ENCODE measurements at regions of chr1 and their contacts with region 1.

Region 1: DNA sequence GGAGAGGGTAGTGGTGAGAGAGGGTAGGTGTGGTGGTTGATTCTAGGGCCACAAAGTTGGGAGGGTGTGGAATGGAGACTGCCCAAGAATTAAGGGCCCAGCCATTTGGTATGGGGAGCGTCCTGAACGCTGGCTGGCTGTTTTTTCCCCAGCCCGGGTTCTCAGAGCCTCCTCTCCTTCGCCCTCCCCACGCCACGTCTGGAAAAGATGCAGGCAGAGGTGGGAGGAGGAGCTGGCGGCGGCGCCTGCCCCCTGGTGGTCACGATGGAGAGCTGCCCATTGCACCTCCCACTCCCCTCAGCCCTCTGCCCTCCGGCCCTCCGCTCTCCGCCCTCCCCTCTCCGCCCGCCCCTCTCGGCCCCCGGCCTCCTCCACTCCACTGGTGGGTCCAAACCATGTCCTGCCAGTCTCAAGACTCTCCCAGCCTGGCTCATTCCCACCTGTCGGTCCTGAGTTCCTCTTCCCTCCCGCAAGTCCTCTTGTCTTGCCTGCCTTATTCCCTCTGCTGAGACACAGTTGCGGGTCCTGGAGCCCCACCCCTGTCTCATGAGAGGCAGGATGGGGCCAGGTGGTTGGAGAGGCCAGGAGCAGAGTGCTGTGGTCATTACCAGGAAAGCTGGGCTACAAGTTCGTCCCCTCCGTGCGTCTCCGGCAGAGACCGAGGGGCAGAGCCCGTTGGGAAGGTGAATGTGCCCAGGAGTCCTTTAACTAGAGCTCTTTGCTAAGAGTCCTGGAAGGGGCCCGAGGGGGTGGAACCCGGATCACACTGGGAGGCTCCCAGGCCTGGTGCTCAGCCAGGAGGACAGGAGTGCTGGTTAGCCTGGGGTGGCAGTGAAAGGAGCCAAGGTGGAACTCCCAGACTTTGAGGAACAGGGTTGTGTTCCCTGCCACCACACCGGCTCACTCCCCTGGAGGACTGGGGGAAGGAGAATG is 22.6 kb downstream of the ETNK2 start:
- DNase-seq: peak; percentile 60 to 84
- H3K4me3 ChIP-seq: no peak overlapping the region
- H3K27ac ChIP-seq: peak overlapping the region; percentile 39 to 64
- H3K4me1 ChIP-seq: peaks cover 5 to 61% (median 36%) of the 10 kb centered on the region in 4 donors
- H3K27me3 ChIP-seq: no peaks in the 10 kb centered on the region
- CTCF ChIP-seq: peak; percentile 85 to 91

Region 2: DNA sequence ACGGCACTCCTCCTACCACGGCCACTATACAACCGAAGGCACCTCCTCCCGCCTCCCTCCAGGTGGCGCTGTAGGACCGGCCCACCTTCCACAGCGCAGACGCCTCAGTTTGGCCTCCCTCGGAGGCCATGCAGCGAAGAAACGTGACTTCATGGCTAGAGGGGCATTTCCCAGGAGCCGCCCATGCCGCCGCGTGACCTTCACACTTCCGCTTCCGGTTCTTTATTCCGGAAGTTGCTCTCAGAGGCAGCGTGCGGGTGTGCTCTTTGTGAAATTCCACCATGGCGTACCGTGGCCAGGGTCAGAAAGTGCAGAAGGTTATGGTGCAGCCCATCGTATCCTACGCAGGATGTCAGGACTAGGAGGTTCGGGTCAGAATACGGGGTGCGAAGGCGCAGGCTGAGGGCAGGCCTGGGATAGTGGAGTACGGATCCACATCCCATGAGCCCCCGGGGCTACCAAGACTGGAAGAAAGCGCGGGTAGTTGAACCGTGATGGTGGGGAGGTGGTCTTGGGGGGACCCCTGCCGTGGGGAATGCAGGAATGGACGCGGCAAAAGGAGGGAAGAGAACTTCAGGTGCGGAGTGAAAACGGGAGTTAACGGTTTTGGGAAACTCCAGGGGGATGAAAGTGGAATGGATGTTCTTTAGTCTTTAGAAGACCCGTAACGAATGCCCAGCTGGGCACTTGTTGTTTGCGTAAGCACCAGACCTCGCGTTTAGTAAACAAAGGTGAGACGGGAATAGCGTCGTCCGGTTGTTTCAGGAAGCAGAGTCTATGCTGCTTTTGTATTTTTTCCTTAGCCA is 267.6 kb before region 1 on chr1 and contains the start of gene SNRPE:
- intact Hi-C with region 1: loop called (anchors 2 kb)
- DNase-seq: peak; percentile 95 to 98
- H3K4me3 ChIP-seq: peak within 1 kb of the TSS; percentile 63 to 94
- H3K27ac ChIP-seq: peak within 1 kb of the TSS; percentile 60 to 69
- H3K4me1 ChIP-seq: peaks cover 0 to 48% (median 26%) of the 10 kb centered on the region in 4 donors
- H3K27me3 ChIP-seq: no peaks in the 10 kb centered on the region
- CTCF ChIP-seq: peak; percentile 82 to 97

Region 3: GRCh38 chr1:203871107-203871875 is 257.9 kb before region 1 on chr1:
- intact Hi-C with region 1: loop called (anchors 2 kb)
- DNase-seq: no peak
- H3K4me3 ChIP-seq: no peak overlapping the region
- H3K27ac ChIP-seq: peak overlapping the region in 1 of 2 donors; percentile 37
- H3K4me1 ChIP-seq: no peaks in the 10 kb centered on the region
- H3K27me3 ChIP-seq: no peaks in the 10 kb centered on the region
- CTCF ChIP-seq: peak; percentile 85 to 99

Region 4: DNA sequence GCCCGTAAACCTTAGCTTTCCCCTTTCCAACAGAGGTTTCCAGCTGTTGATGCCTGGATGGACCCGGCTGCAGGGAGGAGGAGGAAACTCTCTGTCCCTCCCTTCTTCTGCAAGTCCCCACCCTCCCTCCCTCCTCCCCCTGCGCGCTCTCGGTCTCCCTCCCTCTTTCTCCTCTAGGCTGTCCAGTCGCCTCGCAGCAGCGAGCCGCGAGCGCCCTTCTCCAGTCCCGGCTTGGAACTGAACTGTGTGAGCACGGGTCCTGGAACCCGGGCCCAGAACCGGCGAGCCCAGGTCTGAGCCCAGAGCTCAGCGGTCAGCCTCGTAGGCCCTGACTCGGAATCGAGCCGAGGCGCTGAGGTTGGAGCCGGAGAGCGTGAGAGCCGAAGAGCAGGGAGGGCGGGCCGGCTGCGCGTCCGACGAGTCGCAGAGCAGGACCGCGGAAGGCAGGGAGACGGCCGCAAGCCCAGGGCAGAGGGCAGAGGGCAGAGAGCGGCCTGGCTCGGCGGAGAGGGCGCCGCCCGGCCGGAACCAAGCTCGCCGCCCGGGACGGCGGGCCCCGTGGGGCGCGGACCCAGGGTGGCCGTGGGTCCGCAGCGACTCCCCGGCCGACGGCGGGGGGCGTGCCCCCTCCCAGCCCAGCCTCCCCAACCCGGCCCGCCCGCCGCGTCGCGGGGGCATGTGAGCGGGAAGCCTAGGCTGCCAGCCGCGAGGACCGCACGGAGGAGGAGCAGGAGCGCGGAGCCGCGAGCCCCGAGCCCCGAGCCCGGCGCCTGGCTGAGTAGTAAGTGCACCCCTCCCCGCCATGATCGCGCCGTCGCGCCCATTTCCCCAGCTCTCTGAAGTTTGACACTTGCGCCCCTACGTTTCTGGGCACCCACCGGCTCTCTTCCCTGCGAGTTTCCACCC is 56.0 kb before region 1 on chr1 and contains the start of gene SOX13:
- intact Hi-C with region 1: loop called (anchors 1 kb)
- DNase-seq: peak; percentile 92 to 95
- H3K4me3 ChIP-seq: peak within 1 kb of the TSS; percentile 77 to 87
- H3K27ac ChIP-seq: peak within 1 kb of the TSS; percentile 89 to 90
- H3K4me1 ChIP-seq: peaks cover 0 to 40% (median 32%) of the 10 kb centered on the region in 4 donors
- H3K27me3 ChIP-seq: no peaks in the 10 kb centered on the region
- CTCF ChIP-seq: peak; percentile 10 to 27

Region 5: DNA sequence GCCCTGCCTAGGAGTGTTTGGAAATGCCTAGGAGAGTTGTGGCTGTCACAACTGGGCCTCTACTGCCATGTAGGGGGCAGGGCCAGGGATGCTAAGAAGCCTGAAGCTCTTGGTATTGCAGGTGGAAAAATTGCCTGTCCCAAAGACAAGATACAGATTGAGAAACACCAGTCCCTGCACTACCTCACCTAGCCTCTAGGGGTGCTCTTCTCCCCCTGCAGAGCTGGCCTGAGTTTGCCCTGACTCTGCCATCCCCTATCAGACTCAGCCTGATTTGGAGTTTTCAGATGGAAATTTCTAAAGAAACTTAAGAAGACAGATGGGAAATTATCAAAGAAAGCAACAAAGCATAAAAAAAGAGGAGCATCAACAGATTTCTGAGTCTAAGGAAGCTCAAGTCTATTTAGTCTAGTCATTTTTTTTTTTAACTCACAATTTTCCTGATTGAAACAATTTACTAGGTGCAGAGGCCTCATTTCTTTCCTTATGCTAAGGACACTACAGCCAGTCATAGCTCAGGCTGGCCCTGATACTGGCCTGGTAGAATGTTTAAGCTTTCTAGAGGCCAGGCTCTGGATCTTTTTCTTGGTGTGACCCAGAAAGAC is 617.7 kb after region 1 on chr1:
- intact Hi-C with region 1: no loop called
- DNase-seq: peak in 1 of 2 donors; percentile 31
- H3K4me3 ChIP-seq: no peak overlapping the region
- H3K27ac ChIP-seq: no peak overlapping the region
- H3K4me1 ChIP-seq: peaks cover 0 to 6% (median 0%) of the 10 kb centered on the region in 4 donors
- H3K27me3 ChIP-seq: peaks cover 0 to 14% of the 10 kb centered on the region in 2 donors
- CTCF ChIP-seq: peak; percentile 54 to 89